ENCODE measurements at regions of chr18 and their contacts with region 1.

Region 1: DNA sequence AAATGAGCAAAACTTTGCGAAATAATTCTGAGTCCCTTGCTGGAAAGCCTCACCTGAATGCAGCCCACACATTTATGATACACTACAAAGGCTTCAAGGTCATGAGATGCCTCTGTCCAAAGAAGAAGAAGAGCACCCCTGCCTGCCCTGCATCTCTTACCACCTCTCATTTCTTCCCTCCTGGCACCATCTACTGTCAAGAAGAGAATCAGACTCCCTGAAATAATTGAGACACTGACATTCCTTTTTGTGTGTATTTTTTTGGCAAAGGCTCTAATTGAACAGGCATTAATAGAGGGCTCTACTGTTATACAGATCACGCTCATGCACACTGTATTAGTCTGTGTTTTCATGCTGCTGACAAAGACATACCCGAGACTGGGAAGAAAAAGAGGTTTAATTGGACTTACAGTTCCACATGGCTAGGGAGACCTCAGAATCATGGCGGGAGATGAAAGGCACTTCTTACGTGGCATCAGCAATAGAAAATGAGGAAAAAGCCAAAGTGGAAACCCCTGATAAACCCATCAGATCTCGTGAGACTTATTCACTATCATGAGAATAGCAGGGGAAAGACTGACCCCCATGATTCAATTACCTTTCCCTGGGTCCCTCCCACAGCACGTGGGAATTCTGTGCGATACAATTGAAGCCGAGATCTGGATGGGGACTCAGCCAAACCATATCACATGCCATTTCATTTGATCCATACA is 176.3 kb downstream of the ALPK2 start:
- DNase-seq: no peak
- ATAC-seq: no peak
- H3K4me3 ChIP-seq: no peak overlapping the region
- H3K27ac ChIP-seq: no peak overlapping the region
- H3K4me1 ChIP-seq: peaks cover 0 to 23% (median 2%) of the 10 kb centered on the region in 12 donors
- H3K27me3 ChIP-seq: peaks cover 0 to 3% (median 0%) of the 10 kb centered on the region in 9 donors
- CTCF ChIP-seq: no peak
- POLR2A ChIP-seq: no peak

Region 2: DNA sequence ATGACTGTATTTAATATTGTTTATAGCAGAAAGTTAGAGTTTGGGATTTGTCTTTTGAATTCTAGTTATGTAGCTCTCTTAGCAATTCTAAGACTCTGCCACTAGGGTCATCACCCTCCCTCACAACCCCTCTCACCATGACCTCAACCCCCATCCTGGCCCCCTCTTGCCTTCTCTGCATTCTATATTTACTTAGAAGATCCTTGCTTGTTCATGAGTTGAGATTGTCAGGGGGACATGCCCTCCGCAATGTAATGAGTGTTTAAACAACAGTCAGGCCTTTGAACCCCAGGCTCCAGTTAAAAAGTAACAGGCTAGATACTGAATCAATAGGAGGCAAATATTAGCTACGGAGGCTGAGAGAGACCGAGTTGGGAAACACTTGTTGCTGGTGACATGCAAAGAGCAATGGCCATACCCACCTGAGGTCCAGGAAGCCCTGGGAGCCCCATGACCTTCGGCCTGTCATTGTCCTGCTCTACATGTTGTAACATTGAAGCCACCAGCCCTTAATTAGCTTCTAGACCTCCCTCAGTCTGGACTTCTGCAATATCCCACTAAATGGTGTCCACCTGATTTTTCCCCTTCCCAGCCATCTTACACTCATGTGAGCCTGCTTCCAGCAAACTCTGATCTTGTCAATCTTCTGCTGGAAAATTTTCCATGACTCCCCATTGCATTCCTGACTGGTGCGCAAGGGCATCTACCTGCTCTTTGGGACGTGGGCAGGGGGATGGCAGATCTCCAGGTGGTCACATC is 44.8 kb before region 1 on chr18:
- intact Hi-C with region 1: loop called in 1 of 10 experiments (anchors 5 kb)
- DNase-seq: no peak
- ATAC-seq: no peak
- H3K4me3 ChIP-seq: no peak overlapping the region
- H3K27ac ChIP-seq: no peak overlapping the region
- H3K4me1 ChIP-seq: peaks cover 0 to 16% (median 5%) of the 10 kb centered on the region in 12 donors
- H3K27me3 ChIP-seq: no peaks in the 10 kb centered on the region
- CTCF ChIP-seq: no peak
- POLR2A ChIP-seq: no peak

Region 3: GRCh38 chr18:58501066-58501896 is 48.7 kb after region 1 on chr18:
- intact Hi-C with region 1: no loop called
- DNase-seq: no peak
- ATAC-seq: no peak
- H3K4me3 ChIP-seq: no peak overlapping the region
- H3K27ac ChIP-seq: no peak overlapping the region
- H3K4me1 ChIP-seq: no peaks in the 10 kb centered on the region
- H3K27me3 ChIP-seq: no peaks in the 10 kb centered on the region
- CTCF ChIP-seq: no peak
- POLR2A ChIP-seq: no peak

Measured in heart left ventricle (tissue), 16 donors.